MCF 10A (cell line): ENCODE measurements at regions of chr7 and their contacts with region 1.

Region 1: DNA sequence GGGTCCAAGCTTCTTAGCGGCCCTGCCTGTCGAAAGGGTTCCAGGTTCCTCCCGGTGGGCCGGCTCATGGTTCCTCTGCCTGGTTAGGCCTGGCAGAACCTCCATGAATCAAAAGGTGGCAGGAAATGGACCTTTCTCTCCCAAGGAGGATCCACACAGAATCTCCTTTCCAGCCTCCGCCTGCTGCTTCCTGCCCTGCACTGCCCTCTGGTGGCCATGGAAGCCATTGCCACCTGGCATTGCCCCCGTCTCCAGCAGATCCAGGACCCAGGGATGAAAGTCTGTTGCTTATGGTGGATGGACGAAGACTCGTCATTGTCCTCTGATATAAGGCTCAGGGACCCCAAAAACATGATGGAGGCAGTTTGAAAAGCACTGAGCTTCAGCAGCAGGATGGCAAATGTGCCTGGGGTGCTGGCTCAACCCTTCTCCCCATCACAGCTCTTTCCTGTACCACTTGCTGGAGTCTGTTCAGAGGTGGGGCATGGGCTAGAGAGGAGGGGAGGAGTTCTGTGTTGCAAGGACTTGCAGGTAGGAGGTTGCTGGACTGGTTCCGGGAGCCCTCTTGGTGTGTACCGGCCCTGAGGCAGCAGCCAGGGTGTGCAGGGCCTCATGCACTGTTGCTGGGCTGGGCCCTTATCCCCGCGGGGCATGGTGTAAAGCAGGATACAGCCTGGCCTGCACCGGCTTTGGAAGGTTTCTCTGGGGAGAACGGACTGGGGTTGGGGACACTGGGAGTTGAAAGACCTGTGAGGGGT is 11.3 kb upstream of the INMT start:
- DNase-seq: peak; percentile 67
- H3K4me3 Mint-ChIP-seq: no peak overlapping the region
- H3K27ac Mint-ChIP-seq: no peak overlapping the region
- H3K4me1 Mint-ChIP-seq: no peaks in the 10 kb centered on the region
- H3K27me3 Mint-ChIP-seq: peaks cover 27% of the 10 kb centered on the region
- CTCF ChIP-seq: peak; percentile 99

Region 2: GRCh38 chr7:30510124-30511075 is 230.2 kb before region 1 on chr7:
- CTCF ChIA-PET with region 1: interaction called, 7 read pairs
- POLR2A ChIA-PET with region 1: no interaction called
- intact Hi-C with region 1: loop called (anchors 1 kb)
- DNase-seq: peak; percentile 58
- H3K4me3 Mint-ChIP-seq: no peak overlapping the region
- H3K27ac Mint-ChIP-seq: no peak overlapping the region
- H3K4me1 Mint-ChIP-seq: no peaks in the 10 kb centered on the region
- H3K27me3 Mint-ChIP-seq: no peaks in the 10 kb centered on the region
- CTCF ChIP-seq: peak; percentile 86

Region 3: GRCh38 chr7:30612658-30613265 is 127.8 kb before region 1 on chr7:
- CTCF ChIA-PET with region 1: interaction called, 22 read pairs
- POLR2A ChIA-PET with region 1: no interaction called
- intact Hi-C with region 1: no loop called
- DNase-seq: no peak
- H3K4me3 Mint-ChIP-seq: no peak overlapping the region
- H3K27ac Mint-ChIP-seq: peak overlapping the region; percentile 74
- H3K4me1 Mint-ChIP-seq: peaks cover 9% of the 10 kb centered on the region
- H3K27me3 Mint-ChIP-seq: no peaks in the 10 kb centered on the region
- CTCF ChIP-seq: no peak

Region 4: GRCh38 chr7:30644286-30644955 is 96.2 kb before region 1 on chr7:
- CTCF ChIA-PET with region 1: interaction called, 14 read pairs
- POLR2A ChIA-PET with region 1: no interaction called
- intact Hi-C with region 1: no loop called
- DNase-seq: no peak
- H3K4me3 Mint-ChIP-seq: no peak overlapping the region
- H3K27ac Mint-ChIP-seq: no peak overlapping the region
- H3K4me1 Mint-ChIP-seq: no peaks in the 10 kb centered on the region
- H3K27me3 Mint-ChIP-seq: no peaks in the 10 kb centered on the region
- CTCF ChIP-seq: no peak

Region 5: GRCh38 chr7:30750683-30751650 is 10.4 kb after region 1 on chr7:
- CTCF ChIA-PET with region 1: interaction called, 27 read pairs
- POLR2A ChIA-PET with region 1: no interaction called
- intact Hi-C with region 1: no loop called
- DNase-seq: peak; percentile 18
- H3K4me3 Mint-ChIP-seq: no peak overlapping the region
- H3K27ac Mint-ChIP-seq: no peak overlapping the region
- H3K4me1 Mint-ChIP-seq: no peaks in the 10 kb centered on the region
- H3K27me3 Mint-ChIP-seq: no peaks in the 10 kb centered on the region
- CTCF ChIP-seq: no peak

Region 6: GRCh38 chr7:30974605-30975255 is 234.1 kb after region 1 on chr7:
- CTCF ChIA-PET with region 1: no interaction called
- POLR2A ChIA-PET with region 1: no interaction called
- intact Hi-C with region 1: loop called (anchors 2 kb)
- DNase-seq: peak; percentile 77
- H3K4me3 Mint-ChIP-seq: no peak overlapping the region
- H3K27ac Mint-ChIP-seq: no peak overlapping the region
- H3K4me1 Mint-ChIP-seq: no peaks in the 10 kb centered on the region
- H3K27me3 Mint-ChIP-seq: peaks cover 60% of the 10 kb centered on the region
- CTCF ChIP-seq: peak; percentile 71